Gastrocnemius medialis (tissue), 4 donors: ENCODE measurements at regions of chr20 and their contacts with region 1.

Region 1: GRCh38 chr20:34104059-34104458 is 8.0 kb downstream of the EIF2S2 start:
- DNase-seq: no peak
- ATAC-seq: no peak
- H3K4me3 ChIP-seq: no peak overlapping the region
- H3K27ac ChIP-seq: no peak overlapping the region
- H3K4me1 ChIP-seq: peaks cover 11 to 19% of the 10 kb centered on the region in 2 donors
- H3K27me3 ChIP-seq: no peaks in the 10 kb centered on the region
- CTCF ChIP-seq: no peak
- POLR2A ChIP-seq: no peak

Region 2: GRCh38 chr20:34120213-34120612 is 16.2 kb after region 1 on chr20:
- in situ Hi-C with region 1: no loop called
- intact Hi-C with region 1: loop called (anchors 2 kb)
- DNase-seq: no peak
- ATAC-seq: no peak
- H3K4me3 ChIP-seq: no peak overlapping the region
- H3K27ac ChIP-seq: no peak overlapping the region
- H3K4me1 ChIP-seq: no peaks in the 10 kb centered on the region
- H3K27me3 ChIP-seq: no peaks in the 10 kb centered on the region
- CTCF ChIP-seq: no peak
- POLR2A ChIP-seq: no peak

Region 3: DNA sequence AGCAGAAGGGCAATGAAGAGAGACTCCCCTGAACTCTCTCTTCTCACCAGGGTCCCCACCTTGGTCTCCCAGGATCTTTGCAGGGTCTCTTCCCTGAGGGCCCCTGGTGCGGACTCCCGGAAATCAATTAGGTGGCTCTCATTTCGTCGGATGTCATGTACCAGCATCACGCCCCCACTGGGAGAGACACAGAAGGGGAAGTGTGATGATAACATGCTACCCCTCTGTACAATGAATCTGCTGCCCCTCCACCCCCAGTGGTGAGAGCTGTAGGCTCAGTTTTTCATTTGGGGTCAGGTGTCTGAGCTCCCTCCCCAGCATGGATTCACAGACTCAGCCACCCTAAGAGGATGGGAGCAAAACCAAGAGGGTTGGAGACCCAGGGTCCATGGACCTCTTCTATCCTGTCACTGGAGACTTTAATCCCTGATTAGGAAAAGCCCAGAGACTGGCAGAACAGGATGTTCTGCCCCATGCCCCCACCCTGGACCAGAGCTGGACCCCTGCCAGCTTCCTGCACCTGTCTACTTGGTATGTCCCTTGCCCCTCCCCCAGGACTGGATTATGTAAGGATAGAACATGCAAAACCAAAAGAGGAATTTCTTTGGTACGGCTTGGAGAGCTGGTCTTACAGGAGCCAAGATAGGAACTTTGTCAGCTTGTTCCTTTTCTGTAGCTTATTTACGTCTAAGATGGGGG is 757.5 kb after region 1 on chr20:
- in situ Hi-C with region 1: no loop called
- intact Hi-C with region 1: no loop called
- DNase-seq: peak; percentile 74 to 93
- ATAC-seq: peak; percentile 51 to 74
- H3K4me3 ChIP-seq: peak overlapping the region in 2 of 4 donors; percentile 20 to 28
- H3K27ac ChIP-seq: peak overlapping the region; percentile 50 to 82 (median 72)
- H3K4me1 ChIP-seq: peaks cover 23 to 39% of the 10 kb centered on the region in 2 donors
- H3K27me3 ChIP-seq: no peaks in the 10 kb centered on the region
- CTCF ChIP-seq: no peak
- POLR2A ChIP-seq: no peak